ENCODE measurements at regions of chr5 and their contacts with region 1.

Region 1: GRCh38 chr5:115544436-115545350 is at the start of gene FEM1C:
- DNase-seq: peak; percentile 97
- H3K4me3 ChIP-seq: peak within 1 kb of the TSS; percentile 83 to 85
- H3K27ac ChIP-seq: peak within 1 kb of the TSS; percentile 98 to 99
- H3K4me1 ChIP-seq: no peaks in the 10 kb centered on the region
- H3K27me3 ChIP-seq: no peaks in the 10 kb centered on the region
- CTCF ChIP-seq: peak in 2 of 4 experiments; percentile 19 to 22
- POLR2A ChIP-seq: peak; percentile 100
- total RNA-seq, gene FEM1C: 17.4 to 20.8 TPM

Region 2: GRCh38 chr5:115389799-115390382 is 154.8 kb before region 1 on chr5:
- intact Hi-C with region 1: no loop called
- DNase-seq: no peak
- H3K4me3 ChIP-seq: no peak overlapping the region
- H3K27ac ChIP-seq: no peak overlapping the region
- H3K4me1 ChIP-seq: no peaks in the 10 kb centered on the region
- H3K27me3 ChIP-seq: no peaks in the 10 kb centered on the region
- CTCF ChIP-seq: no peak
- POLR2A ChIP-seq: no peak

Region 3: DNA sequence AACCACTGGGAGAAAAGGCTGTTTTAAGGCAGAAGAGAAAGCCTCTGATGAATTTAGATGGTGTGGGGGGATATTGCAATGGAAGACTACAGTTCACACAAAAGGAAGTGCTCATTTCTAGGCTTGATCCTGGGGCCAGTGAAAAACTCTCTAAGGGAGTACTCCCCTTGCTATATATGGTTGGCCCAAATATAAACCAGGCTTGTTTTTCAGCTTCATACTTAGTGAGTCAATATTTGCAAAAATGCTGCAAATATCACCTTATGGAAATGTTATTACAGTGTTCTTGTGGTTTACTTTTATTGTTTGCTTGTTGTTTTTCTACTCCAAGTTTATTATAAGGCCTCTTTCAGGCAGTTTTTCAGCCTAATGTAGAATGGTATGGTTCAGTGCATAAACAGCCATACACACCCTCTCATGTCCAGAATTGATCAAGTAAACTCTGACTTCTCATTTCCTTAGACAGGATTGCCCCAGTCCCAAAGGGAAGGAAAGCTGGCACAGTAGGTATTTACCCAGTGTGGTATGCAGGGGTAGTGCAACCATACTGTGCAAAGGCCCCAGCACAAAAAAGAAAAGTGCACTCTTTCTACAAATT is 115.3 kb before region 1 on chr5:
- intact Hi-C with region 1: loop called (anchors 5 kb)
- DNase-seq: no peak
- H3K4me3 ChIP-seq: no peak overlapping the region
- H3K27ac ChIP-seq: peak overlapping the region in 1 of 2 donors; percentile 14
- H3K4me1 ChIP-seq: peaks cover 6% of the 10 kb centered on the region
- H3K27me3 ChIP-seq: no peaks in the 10 kb centered on the region
- CTCF ChIP-seq: no peak
- POLR2A ChIP-seq: no peak

Region 4: GRCh38 chr5:115625579-115626444 is 81.1 kb after region 1 on chr5 and contains the start of gene TMED7:
- intact Hi-C with region 1: loop called (anchors 10 kb)
- DNase-seq: peak; percentile 99
- H3K4me3 ChIP-seq: peak within 1 kb of the TSS; percentile 69 to 84
- H3K27ac ChIP-seq: peak within 1 kb of the TSS; percentile 92 to 95
- H3K4me1 ChIP-seq: no peaks in the 10 kb centered on the region
- H3K27me3 ChIP-seq: no peaks in the 10 kb centered on the region
- CTCF ChIP-seq: peak in 2 of 4 experiments; percentile 30 to 40
- POLR2A ChIP-seq: peak; percentile 90
- total RNA-seq, gene TMED7: 109 to 155 TPM

Region 5: GRCh38 chr5:115841382-115842088 is 296.8 kb after region 1 on chr5 and contains the starts of genes AP3S1 and ATG12:
- intact Hi-C with region 1: loop called (anchors 10 kb)
- DNase-seq: peak; percentile 91
- H3K4me3 ChIP-seq: peak within 1 kb of the TSS; percentile 86 to 91
- H3K27ac ChIP-seq: peak within 1 kb of the TSS; percentile 96
- H3K4me1 ChIP-seq: no peaks in the 10 kb centered on the region
- H3K27me3 ChIP-seq: no peaks in the 10 kb centered on the region
- CTCF ChIP-seq: peak in 1 of 4 experiments; percentile 4
- POLR2A ChIP-seq: peak; percentile 84
- total RNA-seq, gene AP3S1: 32.0 to 163 TPM
- total RNA-seq, gene ATG12: 29.6 to 67.6 TPM